ENCODE measurements at regions of chr2 and their contacts with region 1.

Region 1: GRCh38 chr2:64727013-64727767 is 73.5 kb upstream of the SERTAD2 start:
- DNase-seq: peak; percentile 24
- H3K4me3 Mint-ChIP-seq: peak overlapping the region; percentile 10
- H3K27ac Mint-ChIP-seq: peak overlapping the region; percentile 89
- H3K4me1 Mint-ChIP-seq: peaks cover 55% of the 10 kb centered on the region
- H3K27me3 Mint-ChIP-seq: no peaks in the 10 kb centered on the region

Region 2: DNA sequence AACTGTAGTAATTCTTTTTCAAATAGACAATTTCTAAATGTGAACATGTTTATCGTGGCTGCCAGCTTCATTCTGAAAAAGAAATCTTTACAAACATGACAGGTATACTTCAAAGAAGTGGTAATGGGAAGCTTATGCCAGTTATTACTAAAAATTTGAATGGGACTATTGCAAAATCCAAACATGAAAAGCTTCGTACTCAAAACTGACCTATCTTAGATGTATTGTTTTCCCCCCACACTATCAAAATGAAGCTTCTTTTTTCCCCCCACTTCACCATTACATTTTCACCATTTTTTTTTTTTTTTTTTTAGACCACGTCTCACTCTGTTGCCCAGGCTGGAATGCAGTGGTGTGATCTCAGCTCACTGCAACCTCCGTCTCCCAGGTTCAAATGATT is 23.0 kb before region 1 on chr2:
- CTCF ChIA-PET with region 1: interaction called, 10 read pairs
- POLR2A ChIA-PET with region 1: no interaction called
- DNase-seq: no peak
- H3K4me3 Mint-ChIP-seq: no peak overlapping the region
- H3K27ac Mint-ChIP-seq: no peak overlapping the region
- H3K4me1 Mint-ChIP-seq: peaks cover 18% of the 10 kb centered on the region
- H3K27me3 Mint-ChIP-seq: no peaks in the 10 kb centered on the region

Region 3: DNA sequence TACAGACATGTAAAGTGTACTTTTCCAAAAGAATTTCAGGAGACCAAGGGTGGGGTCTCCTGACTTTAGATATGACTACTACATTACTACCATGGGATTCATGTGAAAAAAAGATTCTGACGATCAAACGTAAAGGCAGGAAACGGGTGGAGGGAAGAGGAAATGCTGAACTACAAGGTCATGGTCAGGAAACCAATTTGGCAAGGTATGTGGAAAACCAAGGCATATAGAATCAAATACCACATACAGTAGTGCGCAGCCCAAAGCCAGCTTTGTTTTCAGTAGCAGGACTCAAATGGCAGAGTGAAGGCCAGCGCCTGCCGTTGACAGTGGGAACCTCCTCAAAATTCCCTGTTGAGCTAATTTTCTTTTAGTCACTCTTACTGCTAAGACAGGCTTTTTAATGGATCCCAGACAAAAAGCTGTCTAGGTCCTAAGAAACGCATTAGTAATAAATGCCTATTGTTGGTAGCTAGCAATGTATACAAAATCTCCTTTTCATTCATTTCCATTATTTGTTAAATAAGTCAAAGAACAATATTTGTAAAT is 15.9 kb before region 1 on chr2:
- CTCF ChIA-PET with region 1: interaction called, 11 read pairs
- POLR2A ChIA-PET with region 1: interaction called, 3 read pairs
- DNase-seq: no peak
- H3K4me3 Mint-ChIP-seq: no peak overlapping the region
- H3K27ac Mint-ChIP-seq: peak overlapping the region; percentile 63
- H3K4me1 Mint-ChIP-seq: peaks cover 13% of the 10 kb centered on the region
- H3K27me3 Mint-ChIP-seq: no peaks in the 10 kb centered on the region

Region 4: DNA sequence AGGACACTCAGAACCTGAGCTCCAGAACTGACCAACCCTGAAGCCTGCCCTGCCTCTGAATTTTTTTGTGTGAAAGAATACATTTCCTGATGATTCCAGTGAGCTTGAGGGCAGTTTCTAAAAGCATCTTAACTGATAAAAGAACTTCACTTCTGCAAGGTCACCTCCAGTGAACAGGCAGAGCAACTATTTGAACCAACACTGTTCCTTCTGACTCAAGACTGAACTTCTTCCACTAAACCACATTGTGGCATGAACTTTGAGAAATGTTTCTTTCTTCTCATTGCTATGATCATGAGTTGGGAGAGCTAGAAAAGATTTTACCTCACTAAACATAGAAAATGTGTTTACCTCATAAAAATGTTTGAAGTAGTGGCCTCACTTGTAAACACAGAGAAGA is 10.4 kb after region 1 on chr2:
- CTCF ChIA-PET with region 1: interaction called, 23 read pairs
- POLR2A ChIA-PET with region 1: no interaction called
- DNase-seq: peak; percentile 19
- H3K4me3 Mint-ChIP-seq: no peak overlapping the region
- H3K27ac Mint-ChIP-seq: no peak overlapping the region
- H3K4me1 Mint-ChIP-seq: peaks cover 37% of the 10 kb centered on the region
- H3K27me3 Mint-ChIP-seq: no peaks in the 10 kb centered on the region